ENCODE measurements at regions of chr20 and their contacts with region 1.

Region 1: DNA sequence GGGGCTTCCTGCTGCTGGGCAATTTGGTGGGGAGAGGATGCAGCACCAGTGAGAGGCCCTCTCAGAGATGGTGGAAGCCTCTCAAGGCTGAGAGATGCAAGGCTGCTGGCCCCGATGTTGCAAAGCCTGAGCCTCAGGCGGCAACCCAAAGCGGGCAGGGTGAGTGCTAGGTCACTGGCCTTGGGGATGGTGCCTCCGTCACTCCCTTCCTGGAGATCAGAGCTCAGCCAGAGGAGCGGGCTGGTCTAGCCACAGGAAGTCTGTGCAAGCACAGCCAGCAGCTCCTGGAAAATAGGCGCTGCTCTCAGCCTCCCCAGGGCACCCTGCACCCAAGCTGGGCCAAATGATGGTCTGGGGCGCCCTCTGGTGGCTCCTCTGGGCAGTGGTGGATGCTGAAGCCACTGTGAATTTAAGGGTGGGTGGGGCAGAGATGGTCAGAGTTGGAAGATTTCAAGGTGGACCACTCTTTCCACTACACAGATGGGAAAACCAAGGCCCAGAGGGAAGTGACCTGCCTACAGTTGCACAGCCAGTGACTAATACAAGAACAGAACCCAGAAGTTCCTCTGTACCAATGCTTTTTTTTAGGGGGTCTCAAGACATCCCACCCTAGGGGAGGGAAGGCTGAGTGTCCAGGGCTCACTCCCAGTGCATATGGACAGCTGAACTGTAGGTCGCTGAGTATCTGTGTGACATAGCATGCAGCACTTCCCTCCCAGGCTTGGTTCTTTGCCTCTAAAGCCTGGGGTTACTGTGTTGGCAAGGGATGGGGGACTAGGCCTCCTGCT is 20.8 kb downstream of the C20orf203 start:
- DNase-seq: peak; percentile 61 to 85 (median 82)
- H3K4me3 ChIP-seq: no peak overlapping the region
- H3K27ac ChIP-seq: no peak overlapping the region
- H3K4me1 ChIP-seq: peaks cover 3% of the 10 kb centered on the region
- H3K27me3 ChIP-seq: no peaks in the 10 kb centered on the region
- CTCF ChIP-seq: peak; percentile 83 to 92 (median 91)
- EP300 ChIP-seq: no peak
- POLR2A ChIP-seq: no peak

Region 2: DNA sequence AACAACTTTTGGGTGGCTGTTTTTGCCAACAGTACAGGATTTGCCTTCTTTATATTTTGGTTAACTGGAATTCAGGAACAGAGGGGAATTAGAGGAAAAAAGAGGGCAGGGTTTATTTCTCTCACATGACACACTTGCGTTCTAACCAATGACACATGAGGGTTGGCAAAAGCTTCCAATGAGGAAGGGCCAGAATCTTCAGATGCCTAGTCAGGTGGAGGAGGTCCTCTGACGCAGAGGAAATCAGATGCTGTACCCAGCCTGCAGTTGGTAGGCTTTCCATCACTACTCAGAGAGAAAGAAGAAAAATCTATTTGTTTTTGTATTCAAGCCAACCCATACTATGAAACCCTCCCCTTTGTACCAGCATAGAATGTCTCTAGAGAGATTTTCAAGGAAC is 522.6 kb before region 1 on chr20:
- intact Hi-C with region 1: no loop called
- DNase-seq: no peak
- H3K4me3 ChIP-seq: no peak overlapping the region
- H3K27ac ChIP-seq: no peak overlapping the region
- H3K4me1 ChIP-seq: no peaks in the 10 kb centered on the region
- H3K27me3 ChIP-seq: no peaks in the 10 kb centered on the region
- CTCF ChIP-seq: no peak
- EP300 ChIP-seq: no peak
- POLR2A ChIP-seq: no peak

Region 3: DNA sequence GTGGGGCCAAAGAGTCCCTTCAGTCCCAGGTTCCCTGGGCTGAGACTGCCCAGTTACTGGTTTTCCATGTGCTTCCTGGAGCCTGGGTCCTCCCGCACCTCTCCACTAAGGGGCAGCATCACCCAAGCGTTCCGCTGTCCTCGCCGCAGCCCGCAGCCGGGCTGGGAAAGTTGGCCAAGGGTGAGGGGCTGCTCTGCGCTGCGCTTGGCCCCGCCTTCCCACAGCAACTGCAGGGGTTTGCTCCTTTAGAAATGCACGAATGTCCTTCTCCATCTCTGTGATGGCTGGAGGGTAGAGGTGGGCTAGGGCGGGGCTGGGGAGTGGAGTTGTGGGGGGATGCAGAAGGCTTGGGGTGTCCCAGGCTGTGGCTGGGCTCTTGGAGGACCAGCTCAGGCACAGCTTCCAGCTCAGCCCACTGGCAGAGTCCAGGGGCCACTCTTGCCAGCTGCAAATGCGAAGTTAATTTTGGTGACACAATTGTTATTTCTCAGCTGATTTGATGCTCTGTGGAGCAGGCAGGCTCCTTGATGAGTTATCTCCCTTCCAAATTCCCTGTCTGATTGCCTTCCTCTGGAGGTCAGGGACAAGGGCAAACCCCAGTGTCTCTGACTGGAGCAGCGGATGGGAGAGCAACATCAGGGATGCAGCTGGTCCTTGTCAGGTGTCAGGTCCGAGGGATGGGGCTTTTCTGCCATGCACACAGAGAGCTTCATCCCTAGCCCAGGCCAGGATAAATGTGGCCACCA is 131.0 kb before region 1 on chr20:
- intact Hi-C with region 1: loop called (anchors 1 to 5 kb)
- DNase-seq: peak; percentile 46 to 79 (median 71)
- H3K4me3 ChIP-seq: no peak overlapping the region
- H3K27ac ChIP-seq: no peak overlapping the region
- H3K4me1 ChIP-seq: peaks cover 2% of the 10 kb centered on the region
- H3K27me3 ChIP-seq: no peaks in the 10 kb centered on the region
- CTCF ChIP-seq: peak; percentile 66 to 77 (median 75)
- EP300 ChIP-seq: no peak
- POLR2A ChIP-seq: no peak

Measured in ovary (tissue), 10 donors.